Natural killer cell (primary cell): ENCODE measurements at regions of chr11 and their contacts with region 1.

Region 1: GRCh38 chr11:34072832-34073231 is 21.3 kb downstream of the CAPRIN1 start:
- DNase-seq: no peak
- ATAC-seq: no peak
- H3K4me3 ChIP-seq: no peak overlapping the region
- H3K4me3 Mint-ChIP-seq: no peak overlapping the region
- H3K27ac ChIP-seq: no peak overlapping the region
- H3K27ac Mint-ChIP-seq: peak overlapping the region in 1 of 2 donors; percentile 20
- H3K4me1 ChIP-seq: peaks cover 14% of the 10 kb centered on the region
- H3K4me1 Mint-ChIP-seq: peaks cover 37 to 44% of the 10 kb centered on the region in 2 donors
- H3K27me3 ChIP-seq: no peaks in the 10 kb centered on the region
- H3K27me3 Mint-ChIP-seq: no peaks in the 10 kb centered on the region
- CTCF ChIP-seq: no peak

Region 2: GRCh38 chr11:33984682-33985389 is 88.0 kb before region 1 on chr11:
- intact Hi-C with region 1: no loop called
- DNase-seq: no peak
- ATAC-seq: no peak
- H3K4me3 ChIP-seq: no peak overlapping the region
- H3K4me3 Mint-ChIP-seq: no peak overlapping the region
- H3K27ac ChIP-seq: no peak overlapping the region
- H3K27ac Mint-ChIP-seq: no peak overlapping the region
- H3K4me1 ChIP-seq: no peaks in the 10 kb centered on the region
- H3K4me1 Mint-ChIP-seq: no peaks in the 10 kb centered on the region
- H3K27me3 ChIP-seq: no peaks in the 10 kb centered on the region
- H3K27me3 Mint-ChIP-seq: peaks cover 9 to 17% of the 10 kb centered on the region in 2 donors
- CTCF ChIP-seq: no peak

Region 3: DNA sequence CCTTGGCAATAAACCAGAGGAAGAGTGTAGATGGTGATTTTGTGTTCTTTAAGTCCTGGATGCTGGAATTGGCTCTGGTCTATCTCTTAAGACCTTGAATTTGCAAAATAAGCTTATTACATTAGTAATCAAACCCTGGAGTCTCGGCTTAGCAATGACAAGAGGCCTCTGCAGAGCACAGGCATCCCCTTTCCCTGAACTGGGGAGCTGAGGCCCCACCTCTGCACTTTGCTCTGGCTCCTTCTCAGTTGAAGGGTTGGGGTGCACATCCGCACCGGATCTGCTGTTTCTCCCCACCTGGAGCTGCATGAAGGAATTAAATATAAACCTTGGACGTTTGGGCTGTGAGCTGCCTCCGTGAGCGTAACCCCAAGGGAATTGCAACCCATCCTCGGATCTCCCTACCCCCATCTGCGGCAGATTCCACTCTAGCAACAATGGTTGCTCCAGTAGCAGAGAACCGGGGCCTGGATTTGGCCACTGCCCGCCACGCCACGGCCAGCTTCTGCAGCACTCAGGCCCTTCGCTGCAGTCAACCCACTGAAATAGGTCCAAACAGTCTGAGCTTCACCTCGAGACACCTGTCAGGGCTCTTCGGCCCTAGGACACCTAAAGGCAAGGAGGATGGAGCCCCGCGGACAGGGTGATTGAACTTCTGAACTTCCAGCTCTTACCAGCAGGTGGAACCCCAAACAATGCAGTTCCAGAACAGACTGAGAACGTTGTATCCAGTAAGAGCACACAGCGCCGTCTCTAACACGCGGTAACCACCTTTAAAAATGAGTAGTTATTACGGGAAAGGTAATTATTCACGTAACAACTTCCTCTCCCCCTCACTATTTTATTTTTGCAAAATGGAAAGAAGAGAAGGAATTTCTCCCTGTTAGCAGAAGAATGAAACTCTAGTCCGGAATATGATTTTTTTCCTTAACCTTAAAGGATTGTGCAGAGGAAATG is 76.1 kb before region 1 on chr11:
- intact Hi-C with region 1: loop called (anchors 5 kb)
- DNase-seq: peak; percentile 48 to 86
- ATAC-seq: peak; percentile 93 to 100 (median 100)
- H3K4me3 ChIP-seq: no peak overlapping the region
- H3K4me3 Mint-ChIP-seq: no peak overlapping the region
- H3K27ac ChIP-seq: no peak overlapping the region
- H3K27ac Mint-ChIP-seq: no peak overlapping the region
- H3K4me1 ChIP-seq: peaks cover 5% of the 10 kb centered on the region
- H3K4me1 Mint-ChIP-seq: peaks cover 7 to 10% of the 10 kb centered on the region in 2 donors
- H3K27me3 ChIP-seq: peaks cover 11% of the 10 kb centered on the region
- H3K27me3 Mint-ChIP-seq: peaks cover 19 to 22% of the 10 kb centered on the region in 2 donors
- CTCF ChIP-seq: peak; percentile 74